ENCODE measurements at regions of chr19 and their contacts with region 1.

Region 1: GRCh38 chr19:53195265-53195903 is 2.2 kb upstream of the ZNF665 start:
- DNase-seq: peak; percentile 85
- ATAC-seq: peak; percentile 42
- H3K4me3 ChIP-seq: no peak overlapping the region
- H3K4me3 Mint-ChIP-seq: peak overlapping the region; percentile 72
- H3K27ac ChIP-seq: no peak overlapping the region
- H3K27ac Mint-ChIP-seq: peak overlapping the region; percentile 70
- H3K4me1 ChIP-seq: peaks cover 17 to 28% of the 10 kb centered on the region in 2 donors
- H3K4me1 Mint-ChIP-seq: peaks cover 46% of the 10 kb centered on the region
- H3K27me3 ChIP-seq: no peaks in the 10 kb centered on the region
- H3K27me3 Mint-ChIP-seq: no peaks in the 10 kb centered on the region
- CTCF ChIP-seq: peak; percentile 94

Region 2: DNA sequence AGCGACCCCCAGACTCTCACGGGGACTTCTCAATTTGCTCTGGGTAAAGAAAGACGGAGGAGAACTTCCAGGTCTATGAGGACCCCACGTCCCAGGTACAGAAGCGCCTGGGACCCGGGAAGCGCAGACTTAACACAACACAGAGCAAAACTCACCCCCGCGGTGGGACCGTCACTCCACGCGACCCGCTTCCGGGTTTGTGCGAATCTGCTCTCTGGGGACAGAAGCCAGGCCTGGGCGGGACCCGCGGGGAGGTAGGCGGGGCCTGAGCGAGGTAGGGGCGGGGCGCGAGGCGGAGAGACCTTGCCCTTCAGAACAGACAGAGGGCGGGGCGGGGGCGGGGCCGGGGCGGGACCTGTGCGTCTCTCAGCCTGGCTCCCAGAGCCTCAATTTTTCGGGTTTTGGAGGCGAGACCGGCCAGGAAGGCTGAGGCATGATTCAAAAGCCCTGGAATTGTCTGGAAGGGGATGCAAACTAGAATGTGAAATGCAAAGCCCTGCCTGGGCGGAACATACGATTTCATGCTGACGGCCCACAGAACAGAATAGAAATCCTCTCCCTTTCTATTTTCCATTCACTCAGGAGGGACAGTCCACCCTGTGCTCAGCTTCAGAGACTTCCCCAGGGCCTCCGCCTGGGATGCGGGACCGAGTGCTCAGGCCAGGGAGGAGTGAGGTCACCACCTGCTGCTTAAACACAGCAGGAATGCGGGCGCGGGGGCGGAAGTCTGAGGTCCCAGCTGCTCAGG is 252.8 kb before region 1 on chr19:
- CTCF ChIA-PET with region 1: no interaction called
- POLR2A ChIA-PET with region 1: no interaction called
- intact Hi-C with region 1: loop called (anchors 1 kb)
- DNase-seq: peak; percentile 96
- ATAC-seq: peak; percentile 100
- H3K4me3 ChIP-seq: peak overlapping the region; percentile 64 to 97 (median 88)
- H3K4me3 Mint-ChIP-seq: peak overlapping the region; percentile 92
- H3K27ac ChIP-seq: peak overlapping the region; percentile 72 to 90
- H3K27ac Mint-ChIP-seq: peak overlapping the region; percentile 86
- H3K4me1 ChIP-seq: peaks cover 6 to 20% of the 10 kb centered on the region in 2 donors
- H3K4me1 Mint-ChIP-seq: peaks cover 30% of the 10 kb centered on the region
- H3K27me3 ChIP-seq: no peaks in the 10 kb centered on the region
- H3K27me3 Mint-ChIP-seq: no peaks in the 10 kb centered on the region
- CTCF ChIP-seq: no peak

Region 3: DNA sequence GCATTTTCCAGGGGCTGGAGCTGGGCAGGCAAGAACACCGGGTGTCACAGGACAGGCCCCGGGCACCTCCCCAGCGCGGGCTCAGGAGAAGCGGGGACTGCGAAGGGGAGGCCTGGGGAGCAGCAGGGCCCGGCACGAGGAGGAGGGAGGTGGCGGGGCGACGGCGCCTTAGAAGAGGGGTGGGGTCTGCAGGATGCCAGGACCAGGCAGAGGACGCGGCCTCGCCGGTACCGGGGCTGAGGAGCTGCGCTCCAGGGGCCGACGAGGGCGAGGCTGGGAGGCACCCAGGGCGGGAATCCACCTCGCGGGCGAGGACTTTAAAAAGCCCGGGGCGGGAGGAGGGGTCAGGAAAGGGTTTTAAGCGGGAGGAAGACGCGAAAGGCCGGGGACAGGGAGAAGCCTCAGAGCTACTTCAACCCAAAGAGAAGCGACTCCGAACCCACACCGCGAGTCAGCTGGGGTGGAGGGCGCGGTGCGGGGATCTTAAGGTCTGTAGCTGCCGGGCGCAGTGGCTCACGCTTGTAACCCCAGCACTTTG is 37.2 kb before region 1 on chr19:
- CTCF ChIA-PET with region 1: interaction called, 3 read pairs
- POLR2A ChIA-PET with region 1: interaction called, 7 read pairs
- intact Hi-C with region 1: loop called (anchors 1 kb)
- DNase-seq: peak; percentile 53
- ATAC-seq: peak; percentile 18
- H3K4me3 ChIP-seq: peak overlapping the region; percentile 34 to 72 (median 66)
- H3K4me3 Mint-ChIP-seq: peak overlapping the region; percentile 92
- H3K27ac ChIP-seq: peak overlapping the region; percentile 38 to 50
- H3K27ac Mint-ChIP-seq: peak overlapping the region; percentile 54
- H3K4me1 ChIP-seq: peaks cover 13 to 17% of the 10 kb centered on the region in 2 donors
- H3K4me1 Mint-ChIP-seq: peaks cover 26% of the 10 kb centered on the region
- H3K27me3 ChIP-seq: no peaks in the 10 kb centered on the region
- H3K27me3 Mint-ChIP-seq: no peaks in the 10 kb centered on the region
- CTCF ChIP-seq: no peak

Region 4: GRCh38 chr19:53394974-53395839 is 199.8 kb after region 1 on chr19 and contains the start of gene ZNF765:
- CTCF ChIA-PET with region 1: interaction called, 6 read pairs
- POLR2A ChIA-PET with region 1: no interaction called
- intact Hi-C with region 1: loop called (anchors 1 kb)
- DNase-seq: peak; percentile 96
- ATAC-seq: peak; percentile 100
- H3K4me3 ChIP-seq: peak within 1 kb of the TSS; percentile 65 to 85 (median 78)
- H3K4me3 Mint-ChIP-seq: peak within 1 kb of the TSS; percentile 86
- H3K27ac ChIP-seq: peak within 1 kb of the TSS; percentile 34 to 85
- H3K27ac Mint-ChIP-seq: peak within 1 kb of the TSS; percentile 69
- H3K4me1 ChIP-seq: peaks cover 11 to 16% of the 10 kb centered on the region in 2 donors
- H3K4me1 Mint-ChIP-seq: peaks cover 30% of the 10 kb centered on the region
- H3K27me3 ChIP-seq: no peaks in the 10 kb centered on the region
- H3K27me3 Mint-ChIP-seq: no peaks in the 10 kb centered on the region
- CTCF ChIP-seq: peak; percentile 64
- total RNA-seq, gene ZNF765: 24.0 and 26.6 TPM in 2 replicates

Region 5: DNA sequence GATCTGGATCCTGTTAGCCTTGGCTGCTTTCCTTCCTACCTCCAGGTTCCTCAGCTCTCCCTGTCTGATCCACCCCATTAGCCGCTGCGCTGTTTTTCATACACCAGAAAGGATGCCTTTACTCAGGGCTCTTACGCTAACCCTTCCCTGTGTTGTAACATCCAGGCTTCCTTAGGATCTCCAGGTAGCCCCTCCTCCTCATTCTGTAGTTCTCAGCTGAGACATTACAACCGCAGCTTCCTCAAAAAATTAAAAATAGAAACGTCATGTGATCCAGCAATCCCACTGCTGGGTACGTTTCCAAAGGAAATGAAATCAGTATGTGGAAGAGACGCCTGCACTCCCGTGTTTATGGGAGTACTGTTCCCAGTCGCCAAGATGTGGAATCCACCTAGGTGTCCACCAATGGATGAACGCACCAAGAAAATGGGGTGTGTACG is 653.9 kb after region 1 on chr19:
- CTCF ChIA-PET with region 1: no interaction called
- POLR2A ChIA-PET with region 1: no interaction called
- intact Hi-C with region 1: loop called (anchors 10 kb)
- DNase-seq: no peak
- ATAC-seq: no peak
- H3K4me3 ChIP-seq: no peak overlapping the region
- H3K4me3 Mint-ChIP-seq: no peak overlapping the region
- H3K27ac ChIP-seq: no peak overlapping the region
- H3K27ac Mint-ChIP-seq: no peak overlapping the region
- H3K4me1 ChIP-seq: peaks cover 12 to 23% of the 10 kb centered on the region in 2 donors
- H3K4me1 Mint-ChIP-seq: peaks cover 11% of the 10 kb centered on the region
- H3K27me3 ChIP-seq: peaks cover 0 to 29% (median 12%) of the 10 kb centered on the region in 4 experiments
- H3K27me3 Mint-ChIP-seq: peaks cover 32% of the 10 kb centered on the region
- CTCF ChIP-seq: no peak

Region 6: DNA sequence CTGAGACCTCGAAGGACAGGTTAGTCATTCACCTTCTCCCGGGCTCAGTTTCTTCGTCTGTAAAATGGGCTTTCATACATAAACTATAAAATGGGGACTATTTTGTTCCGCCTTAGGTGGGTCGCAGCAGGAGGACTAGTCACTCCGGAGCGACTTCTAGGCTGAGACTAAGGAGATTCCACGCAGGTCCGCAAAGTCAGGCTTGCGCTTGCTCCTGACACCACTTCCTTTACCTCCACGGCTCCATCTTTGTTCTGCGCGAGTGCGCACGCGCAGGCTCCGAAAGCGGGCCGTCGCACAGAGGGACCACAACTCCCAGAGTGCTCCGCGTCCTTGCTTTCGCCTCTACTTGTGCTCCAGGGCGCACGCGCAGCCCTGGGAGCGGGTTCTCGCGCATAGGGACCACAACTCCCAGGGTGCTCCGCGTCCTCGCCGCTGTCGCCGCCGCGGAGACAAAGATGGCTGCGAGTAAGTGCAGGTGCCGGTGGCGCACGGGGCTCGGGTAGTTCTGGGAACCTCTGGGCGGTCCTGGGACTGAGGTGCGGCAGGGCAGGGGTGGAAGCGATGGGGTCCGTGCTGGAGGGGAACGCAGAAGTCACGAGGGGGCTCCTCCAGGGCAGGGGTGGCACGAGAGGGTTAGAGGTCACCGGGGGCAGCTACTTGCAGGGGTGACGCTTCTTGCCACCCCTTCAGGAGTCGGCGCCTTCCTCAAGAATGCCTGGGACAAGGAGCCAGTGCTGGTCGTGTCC is 907.2 kb after region 1 on chr19 and contains the start of gene NDUFA3:
- CTCF ChIA-PET with region 1: no interaction called
- POLR2A ChIA-PET with region 1: no interaction called
- intact Hi-C with region 1: loop called (anchors 5 kb)
- DNase-seq: peak; percentile 99
- ATAC-seq: peak; percentile 99
- H3K4me3 ChIP-seq: peak within 1 kb of the TSS; percentile 59 to 90 (median 76)
- H3K4me3 Mint-ChIP-seq: peak within 1 kb of the TSS; percentile 100
- H3K27ac ChIP-seq: peak within 1 kb of the TSS; percentile 59 to 74
- H3K27ac Mint-ChIP-seq: peak within 1 kb of the TSS; percentile 89
- H3K4me1 ChIP-seq: peaks cover 6 to 13% of the 10 kb centered on the region in 2 donors
- H3K4me1 Mint-ChIP-seq: peaks cover 20% of the 10 kb centered on the region
- H3K27me3 ChIP-seq: no peaks in the 10 kb centered on the region
- H3K27me3 Mint-ChIP-seq: no peaks in the 10 kb centered on the region
- CTCF ChIP-seq: no peak
- total RNA-seq, gene NDUFA3: 91.8 and 94.4 TPM in 2 replicates